K562 (cell line): ENCODE measurements at regions of chr11 and their contacts with region 1.

Region 1: GRCh38 chr11:77547863-77548551 is 41.7 kb upstream of the AQP11 start:
- DNase-seq: peak; percentile 30 to 70 (median 40)
- ATAC-seq: peak; percentile 74
- H3K4me3 ChIP-seq: no peak overlapping the region
- H3K27ac ChIP-seq: no peak overlapping the region
- H3K4me1 ChIP-seq: no peaks in the 10 kb centered on the region
- H3K27me3 ChIP-seq: no peaks in the 10 kb centered on the region; a peak in 1 of 5 replicates
- CTCF ChIP-seq: peak; percentile 63 to 89 (median 71); a peak in 5 of 6 replicates
- EP300 ChIP-seq: no peak
- POLR2A ChIP-seq: no peak
- RAD21 ChIP-seq: peak; percentile 72 to 87

Region 2: GRCh38 chr11:77127232-77127911 is 420.6 kb before region 1 on chr11:
- CTCF ChIA-PET with region 1: interaction called, 7 read pairs
- POLR2A ChIA-PET with region 1: no interaction called
- in situ Hi-C with region 1: no loop called
- intact Hi-C with region 1: loop called (anchors 1 kb)
- DNase-seq: peak; percentile 59 to 85 (median 84)
- ATAC-seq: peak; percentile 91
- H3K4me3 ChIP-seq: peak overlapping the region; percentile 14
- H3K27ac ChIP-seq: no peak overlapping the region
- H3K4me1 ChIP-seq: peaks cover 0 to 20% of the 10 kb centered on the region in 2 experiments; a peak in 2 of 5 replicates
- H3K27me3 ChIP-seq: peaks cover 4 to 41% of the 10 kb centered on the region in 2 experiments; a peak in 4 of 5 replicates
- CTCF ChIP-seq: peak; percentile 97 to 99 (median 98)
- EP300 ChIP-seq: no peak
- POLR2A ChIP-seq: no peak
- RAD21 ChIP-seq: peak; percentile 91 to 93

Region 3: DNA sequence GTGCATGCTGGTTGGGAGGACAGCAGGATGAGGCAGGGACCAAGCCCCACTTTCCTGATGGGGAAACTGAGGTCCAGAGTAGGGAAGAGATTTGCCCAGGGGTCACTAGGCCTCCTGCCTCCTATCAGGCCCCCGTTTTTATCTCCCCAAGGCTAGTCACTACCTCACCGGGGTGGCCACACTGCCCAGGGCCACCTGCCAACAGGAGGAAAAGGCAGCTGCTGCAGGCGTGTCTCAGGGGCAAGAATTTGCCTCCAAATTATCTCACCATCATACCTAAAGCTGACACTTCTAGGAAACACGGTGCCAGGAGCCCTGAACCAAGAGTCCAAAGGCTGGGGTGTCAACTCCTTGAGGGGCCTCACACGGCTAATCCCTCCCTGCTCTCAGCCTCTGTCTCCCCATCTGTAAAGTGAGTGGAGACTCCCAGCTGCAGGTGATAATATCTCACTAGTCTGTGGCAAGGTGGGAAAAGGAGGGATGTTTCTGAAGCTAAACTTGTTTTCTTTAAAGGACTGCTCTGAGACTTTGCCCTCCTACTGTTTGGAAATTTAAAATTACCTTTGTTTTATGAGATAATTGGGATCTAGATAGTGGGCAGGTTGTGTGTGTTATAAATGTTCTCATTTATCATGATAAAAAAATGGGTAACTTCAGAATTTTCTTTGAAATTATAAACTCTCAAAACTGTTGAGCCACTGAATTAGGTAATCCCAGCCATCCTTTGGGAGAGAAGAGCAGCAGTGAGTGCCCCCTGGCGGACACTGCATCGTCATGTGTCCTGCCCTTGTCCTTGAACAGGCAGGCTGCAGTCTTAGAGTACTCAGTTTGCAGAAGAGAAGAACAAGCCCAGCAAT is 360.0 kb before region 1 on chr11:
- CTCF ChIA-PET with region 1: interaction called, 13 read pairs
- POLR2A ChIA-PET with region 1: no interaction called
- in situ Hi-C with region 1: loop called (anchors 10 kb)
- intact Hi-C with region 1: loop called (anchors 1 kb)
- DNase-seq: peak; percentile 80 to 85 (median 82)
- ATAC-seq: peak; percentile 82
- H3K4me3 ChIP-seq: no peak overlapping the region
- H3K27ac ChIP-seq: no peak overlapping the region
- H3K4me1 ChIP-seq: peaks cover 4 to 29% of the 10 kb centered on the region in 2 experiments; a peak in 3 of 5 replicates
- H3K27me3 ChIP-seq: peaks cover 9 to 52% of the 10 kb centered on the region in 2 experiments; a peak in 4 of 5 replicates
- CTCF ChIP-seq: peak; percentile 89 to 94 (median 90)
- EP300 ChIP-seq: no peak
- POLR2A ChIP-seq: no peak
- RAD21 ChIP-seq: peak; percentile 82 to 89

Region 4: GRCh38 chr11:77195171-77195751 is 352.7 kb before region 1 on chr11:
- CTCF ChIA-PET with region 1: interaction called, 15 read pairs
- POLR2A ChIA-PET with region 1: interaction called, 3 read pairs
- in situ Hi-C with region 1: loop called (anchors 10 kb)
- intact Hi-C with region 1: loop called (anchors 1 kb)
- DNase-seq: no peak
- ATAC-seq: no peak
- H3K4me3 ChIP-seq: no peak overlapping the region
- H3K27ac ChIP-seq: no peak overlapping the region
- H3K4me1 ChIP-seq: peaks cover 6 to 17% of the 10 kb centered on the region in 2 experiments; a peak in 4 of 5 replicates
- H3K27me3 ChIP-seq: peaks cover 0 to 46% of the 10 kb centered on the region in 2 experiments; a peak in 2 of 5 replicates
- CTCF ChIP-seq: no peak
- EP300 ChIP-seq: no peak
- POLR2A ChIP-seq: no peak
- RAD21 ChIP-seq: no peak

Region 5: DNA sequence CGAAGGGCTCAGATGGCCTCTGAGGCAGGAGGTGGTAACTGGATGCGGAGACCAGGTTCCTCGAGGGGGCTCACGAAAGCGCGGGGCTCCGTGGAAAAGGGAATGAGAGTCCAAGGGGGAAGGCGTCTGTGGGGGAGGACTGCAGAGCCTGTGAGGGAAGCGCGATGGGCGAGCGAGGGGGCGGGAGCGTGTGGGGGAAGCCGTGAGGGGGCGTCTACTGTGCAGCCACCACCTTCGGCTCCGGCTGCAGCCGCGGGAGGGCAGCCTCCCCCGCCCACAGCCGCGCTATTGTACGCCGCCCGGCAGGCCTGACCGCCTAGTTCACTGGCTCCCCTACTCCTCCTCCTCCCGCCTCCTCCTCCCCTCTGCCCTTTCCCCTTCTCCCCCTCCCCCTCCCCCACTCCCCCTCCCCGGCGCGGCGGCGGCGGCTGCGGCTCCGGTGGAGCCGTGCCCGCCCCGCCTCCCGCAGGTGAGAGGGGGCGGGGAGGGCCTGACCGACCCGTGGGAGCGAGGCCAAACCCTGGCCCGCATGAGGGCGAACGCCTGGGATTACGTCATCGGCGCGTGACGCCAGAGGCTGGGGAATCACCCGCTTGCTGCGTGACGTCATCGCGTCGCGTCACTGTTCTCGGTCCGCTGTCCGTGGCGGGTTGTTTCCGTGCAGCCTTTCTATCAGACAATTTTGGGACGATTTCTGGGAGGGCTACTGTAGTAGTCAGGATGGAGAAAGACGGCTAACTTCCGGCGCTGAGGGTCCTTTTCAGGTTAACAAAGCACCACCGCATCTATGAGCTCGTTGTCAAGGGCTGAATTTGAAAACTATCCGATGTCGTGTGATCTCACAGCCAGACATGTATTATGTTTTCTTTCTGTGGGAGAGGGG is 74.0 kb before region 1 on chr11 and contains the start of gene PAK1:
- CTCF ChIA-PET with region 1: interaction called, 3 read pairs
- POLR2A ChIA-PET with region 1: no interaction called
- in situ Hi-C with region 1: no loop called
- intact Hi-C with region 1: loop called (anchors 5 kb)
- DNase-seq: peak; percentile 90 to 94 (median 92)
- ATAC-seq: peak; percentile 99
- H3K4me3 ChIP-seq: peak within 1 kb of the TSS; percentile 49
- H3K27ac ChIP-seq: peak within 1 kb of the TSS; percentile 34; the same call in 1 of the 3 replicates
- H3K4me1 ChIP-seq: peaks cover 0 to 14% of the 10 kb centered on the region in 2 experiments; a peak in 1 of 5 replicates
- H3K27me3 ChIP-seq: peaks cover 1 to 6% of the 10 kb centered on the region in 2 experiments; a peak in 3 of 5 replicates
- CTCF ChIP-seq: peak in 2 of 3 experiments; percentile 48 to 67; a peak in 4 of 6 replicates
- EP300 ChIP-seq: peak; percentile 18; the same call in 1 of the 2 replicates
- POLR2A ChIP-seq: no peak
- RAD21 ChIP-seq: peak in 1 of 2 experiments; percentile 26; a peak in 1 of 4 replicates
- polyA plus RNA-seq, gene PAK1: 0.52 to 0.80 TPM